Panc1 (cell line): ENCODE measurements at regions of chr5 and their contacts with region 1.

Region 1: DNA sequence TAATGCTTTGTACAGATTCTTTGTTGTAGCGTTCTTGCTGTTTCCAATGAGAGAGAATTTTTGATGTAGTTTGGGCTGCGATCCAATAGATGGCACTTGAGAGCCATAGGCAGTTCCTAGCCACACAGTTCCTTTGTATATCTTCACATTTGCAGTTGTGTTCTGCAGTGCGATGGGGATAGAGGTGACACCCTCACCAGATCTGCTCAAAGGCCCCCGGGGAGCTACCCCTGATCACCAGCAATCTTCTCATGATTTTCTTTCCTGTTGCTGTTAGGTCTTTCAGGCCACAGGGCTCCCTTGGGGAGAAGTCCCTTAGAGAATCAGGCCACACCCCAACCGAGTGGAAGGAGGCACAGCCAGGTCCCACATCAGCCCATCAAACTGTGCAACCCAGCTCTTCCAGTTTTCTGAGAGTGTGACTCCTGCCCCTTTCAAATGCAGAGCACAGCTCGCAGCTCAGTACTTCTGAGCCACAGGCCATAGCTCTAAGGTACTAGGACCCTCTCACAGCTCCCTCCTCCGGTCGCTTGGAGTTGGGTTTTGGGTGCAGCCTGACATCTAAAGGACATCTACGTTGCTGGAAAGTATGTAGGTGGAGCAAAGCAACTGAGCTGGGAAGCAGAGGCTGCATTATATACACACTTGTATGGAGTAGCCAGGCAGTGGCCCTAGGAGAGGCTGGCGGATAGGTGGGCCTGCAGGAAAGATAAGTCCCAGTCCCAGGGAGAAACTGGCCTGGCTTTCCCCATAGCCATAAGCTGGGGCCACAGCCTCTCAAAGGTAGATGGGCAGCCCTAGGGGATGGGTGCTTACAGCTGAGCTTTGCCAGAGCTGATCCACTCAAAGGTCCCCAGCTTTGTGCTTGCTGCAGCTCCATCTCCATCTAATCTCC is 353.5 kb downstream of the SLCO4C1 start:
- DNase-seq: peak; percentile 32
- ATAC-seq: peak; percentile 72; the same call in 1 of the 2 replicates
- H3K4me3 ChIP-seq: no peak overlapping the region
- H3K27ac ChIP-seq: no peak overlapping the region
- H3K4me1 ChIP-seq: no peaks in the 10 kb centered on the region
- H3K27me3 ChIP-seq: no peaks in the 10 kb centered on the region
- CTCF ChIP-seq: peak; percentile 76

Region 2: DNA sequence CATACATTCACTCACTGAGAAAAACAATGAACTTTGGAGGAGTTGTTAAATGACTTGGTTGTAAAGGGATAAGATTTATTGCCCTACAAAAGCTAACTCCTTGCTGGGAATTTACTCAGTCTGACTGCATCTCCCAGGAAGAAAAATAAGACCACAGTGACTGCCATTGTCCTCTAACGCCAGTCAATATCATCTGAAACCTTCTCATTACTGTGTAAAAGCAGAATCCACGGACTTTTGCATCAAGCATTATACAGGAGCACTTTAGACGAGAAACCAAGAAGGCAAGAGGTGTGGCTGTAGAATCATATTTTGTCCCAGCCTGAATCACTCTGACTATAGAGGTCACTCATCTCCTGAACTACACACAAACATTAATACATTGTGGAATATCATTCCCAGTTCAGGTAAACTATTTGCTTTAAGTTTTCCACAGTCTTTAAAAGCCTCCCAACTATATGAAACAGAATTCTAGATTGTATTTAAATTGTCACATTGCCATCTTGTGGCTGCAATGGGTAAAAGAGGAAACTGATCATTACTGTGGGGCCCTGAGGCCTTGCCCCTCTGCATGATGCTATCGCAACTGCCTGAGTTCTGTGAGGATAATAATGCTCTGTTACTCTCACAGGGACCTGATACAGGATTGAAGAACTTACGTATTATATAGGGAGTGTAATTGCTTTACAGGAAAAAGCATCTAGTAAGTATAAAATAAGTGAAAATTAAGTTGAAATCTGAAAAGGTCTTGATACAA is 210.6 kb after region 1 on chr5:
- CTCF ChIA-PET with region 1: no interaction called
- POLR2A ChIA-PET with region 1: no interaction called
- in situ Hi-C with region 1: no loop called
- intact Hi-C with region 1: loop called (anchors 2 kb)
- DNase-seq: peak; percentile 7
- ATAC-seq: peak; percentile 88
- H3K4me3 ChIP-seq: no peak overlapping the region
- H3K27ac ChIP-seq: no peak overlapping the region
- H3K4me1 ChIP-seq: no peaks in the 10 kb centered on the region
- H3K27me3 ChIP-seq: no peaks in the 10 kb centered on the region
- CTCF ChIP-seq: peak; percentile 66

Region 3: GRCh38 chr5:102223542-102224477 is 281.2 kb after region 1 on chr5:
- CTCF ChIA-PET with region 1: no interaction called
- POLR2A ChIA-PET with region 1: no interaction called
- in situ Hi-C with region 1: no loop called
- intact Hi-C with region 1: loop called (anchors 10 kb)
- DNase-seq: peak; percentile 22
- ATAC-seq: no peak
- H3K4me3 ChIP-seq: no peak overlapping the region
- H3K27ac ChIP-seq: no peak overlapping the region
- H3K4me1 ChIP-seq: no peaks in the 10 kb centered on the region
- H3K27me3 ChIP-seq: no peaks in the 10 kb centered on the region
- CTCF ChIP-seq: peak; percentile 67; the same call in 1 of the 2 replicates

Region 4: GRCh38 chr5:102388235-102388634 is 445.7 kb after region 1 on chr5:
- CTCF ChIA-PET with region 1: no interaction called
- POLR2A ChIA-PET with region 1: no interaction called
- in situ Hi-C with region 1: no loop called
- intact Hi-C with region 1: no loop called
- DNase-seq: no peak
- ATAC-seq: no peak
- H3K4me3 ChIP-seq: no peak overlapping the region
- H3K27ac ChIP-seq: no peak overlapping the region
- H3K4me1 ChIP-seq: no peaks in the 10 kb centered on the region
- H3K27me3 ChIP-seq: no peaks in the 10 kb centered on the region
- CTCF ChIP-seq: no peak